ENCODE measurements at regions of chr19 and their contacts with region 1.

Region 1: DNA sequence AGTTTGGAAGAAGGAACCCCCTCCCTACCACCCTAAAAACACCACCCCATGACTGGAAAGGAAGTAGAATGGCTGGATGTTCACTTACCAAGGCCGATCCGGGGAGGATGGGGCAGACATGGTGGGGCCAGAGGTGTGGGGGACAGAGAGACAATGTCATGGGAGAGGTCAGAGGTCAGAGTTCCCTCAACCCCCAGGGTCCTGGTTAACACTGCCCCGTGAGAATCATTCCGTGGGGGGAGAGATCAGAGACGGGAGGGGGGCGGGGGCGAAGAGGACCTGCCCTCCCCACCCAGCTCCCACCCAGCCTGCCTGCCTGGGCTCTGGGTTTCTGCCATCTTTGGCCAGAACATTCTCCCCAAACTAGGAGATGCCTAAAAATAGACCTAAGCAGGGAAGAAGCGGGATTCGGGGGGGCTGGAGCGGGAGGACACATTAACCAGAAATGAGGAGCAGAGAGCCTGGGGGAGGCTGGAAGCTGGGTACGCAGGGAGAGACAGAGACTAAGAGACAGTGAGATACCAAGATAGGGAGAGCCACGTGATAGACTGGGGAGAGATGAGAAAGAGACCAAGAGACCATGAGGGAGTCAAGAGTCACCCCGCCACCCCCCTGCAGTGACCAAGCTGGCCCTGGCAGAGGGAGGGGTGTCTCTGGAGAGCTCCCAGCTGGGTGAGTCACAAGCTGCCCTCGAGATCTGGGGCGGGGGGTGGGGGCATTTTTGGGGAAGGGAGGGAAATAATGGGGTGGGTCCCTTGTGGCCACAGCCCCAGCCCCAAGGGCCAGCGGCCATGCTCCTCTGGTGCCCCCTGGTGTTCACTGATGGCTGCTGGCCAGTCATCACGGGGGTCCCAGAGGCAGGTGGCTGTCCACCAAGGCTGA is 6.1 kb upstream of the KANK2 start:
- DNase-seq: peak; percentile 69 to 75
- H3K4me3 ChIP-seq: no peak overlapping the region
- H3K27ac ChIP-seq: no peak overlapping the region
- H3K4me1 ChIP-seq: peaks cover 18% of the 10 kb centered on the region
- H3K27me3 ChIP-seq: no peaks in the 10 kb centered on the region
- CTCF ChIP-seq: peak; percentile 94

Region 2: GRCh38 chr19:10864538-10864899 is 338.9 kb before region 1 on chr19:
- CTCF ChIA-PET with region 1: interaction called, 10 read pairs
- POLR2A ChIA-PET with region 1: no interaction called
- intact Hi-C with region 1: no loop called
- DNase-seq: peak; percentile 42 to 78
- H3K4me3 ChIP-seq: no peak overlapping the region
- H3K27ac ChIP-seq: no peak overlapping the region
- H3K4me1 ChIP-seq: peaks cover 10% of the 10 kb centered on the region
- H3K27me3 ChIP-seq: no peaks in the 10 kb centered on the region
- CTCF ChIP-seq: peak; percentile 95

Region 3: GRCh38 chr19:11125994-11126685 is 77.3 kb before region 1 on chr19:
- CTCF ChIA-PET with region 1: interaction called, 4 read pairs
- POLR2A ChIA-PET with region 1: no interaction called
- intact Hi-C with region 1: loop called (anchors 1 kb)
- DNase-seq: peak; percentile 64 to 72
- H3K4me3 ChIP-seq: no peak overlapping the region
- H3K27ac ChIP-seq: no peak overlapping the region
- H3K4me1 ChIP-seq: no peaks in the 10 kb centered on the region
- H3K27me3 ChIP-seq: no peaks in the 10 kb centered on the region
- CTCF ChIP-seq: peak; percentile 88

Region 4: DNA sequence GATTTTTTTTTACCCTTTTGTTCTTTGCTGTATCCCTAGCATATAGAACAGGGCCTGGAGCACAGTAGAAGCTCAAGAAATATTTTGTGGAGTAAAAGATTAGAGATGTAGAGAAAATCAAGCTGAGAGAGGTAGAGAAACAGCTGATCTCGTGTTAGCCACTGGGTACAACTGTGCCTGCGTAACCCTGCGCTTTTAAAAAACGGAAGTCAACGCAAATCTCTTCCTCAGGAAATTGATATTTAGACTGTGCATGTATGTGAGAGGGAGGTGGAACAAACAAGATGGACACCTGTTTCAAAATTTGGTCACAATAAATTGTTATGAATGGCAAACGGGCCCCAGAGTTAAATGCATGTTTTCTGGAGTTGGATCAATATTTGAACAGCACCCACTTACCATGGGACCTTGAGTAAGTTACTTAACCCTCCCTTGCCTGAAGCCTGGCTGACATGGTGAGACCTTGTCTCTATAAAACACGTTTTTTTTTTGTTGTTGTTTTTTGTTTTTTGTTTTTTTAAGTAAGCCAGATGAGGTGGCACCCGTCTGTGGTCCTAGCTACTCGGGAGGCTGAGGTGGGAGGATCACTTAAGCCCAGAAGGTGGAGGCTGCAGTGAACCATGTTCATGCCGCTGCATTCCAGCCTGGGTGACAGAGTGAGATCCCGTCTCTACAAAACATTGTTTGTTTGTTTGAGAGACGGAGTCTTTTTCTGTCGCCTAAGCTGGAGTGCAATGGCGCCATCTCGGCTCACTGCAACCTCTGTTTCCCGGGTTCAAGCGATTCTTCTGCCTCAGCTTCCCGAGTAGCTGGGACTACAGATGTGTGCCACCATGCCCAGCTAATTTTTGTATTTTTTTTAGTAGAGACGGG is 184.0 kb after region 1 on chr19:
- CTCF ChIA-PET with region 1: interaction called, 15 read pairs
- POLR2A ChIA-PET with region 1: no interaction called
- intact Hi-C with region 1: no loop called
- DNase-seq: no peak
- H3K4me3 ChIP-seq: no peak overlapping the region
- H3K27ac ChIP-seq: no peak overlapping the region
- H3K4me1 ChIP-seq: peaks cover 18% of the 10 kb centered on the region
- H3K27me3 ChIP-seq: no peaks in the 10 kb centered on the region
- CTCF ChIP-seq: no peak

Measured in PC-9 (cell line).